ENCODE measurements at regions of chr3 and their contacts with region 1.

Region 1: DNA sequence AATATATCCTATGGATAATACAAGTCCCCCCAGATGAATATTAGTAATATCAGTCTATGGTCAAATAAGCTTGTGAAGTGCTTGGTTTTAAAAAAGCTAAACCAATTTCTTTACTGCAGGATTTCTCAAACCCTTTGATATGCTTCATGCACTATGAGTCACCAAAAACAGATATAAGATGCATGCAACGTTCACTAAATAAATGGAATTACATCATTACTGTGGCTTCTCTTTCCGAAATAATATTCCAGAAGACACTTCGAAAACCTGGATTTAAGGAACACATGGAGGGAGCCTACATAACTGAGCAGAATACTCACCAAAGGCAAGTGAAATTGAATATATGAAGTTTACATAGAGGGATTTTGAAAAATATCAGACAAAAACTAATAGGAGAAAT is 126.3 kb upstream of the ABI3BP start:
- DNase-seq: no peak
- H3K4me3 ChIP-seq: no peak overlapping the region
- H3K27ac ChIP-seq: no peak overlapping the region
- H3K4me1 ChIP-seq: no peaks in the 10 kb centered on the region
- H3K27me3 ChIP-seq: no peaks in the 10 kb centered on the region
- CTCF ChIP-seq: no peak
- POLR2A ChIP-seq: no peak

Region 2: GRCh38 chr3:100756441-100756840 is 363.1 kb before region 1 on chr3:
- intact Hi-C with region 1: loop called (anchors 5 kb)
- DNase-seq: no peak
- H3K4me3 ChIP-seq: no peak overlapping the region
- H3K27ac ChIP-seq: no peak overlapping the region
- H3K4me1 ChIP-seq: no peaks in the 10 kb centered on the region
- H3K27me3 ChIP-seq: no peaks in the 10 kb centered on the region
- CTCF ChIP-seq: no peak
- POLR2A ChIP-seq: no peak

Region 3: DNA sequence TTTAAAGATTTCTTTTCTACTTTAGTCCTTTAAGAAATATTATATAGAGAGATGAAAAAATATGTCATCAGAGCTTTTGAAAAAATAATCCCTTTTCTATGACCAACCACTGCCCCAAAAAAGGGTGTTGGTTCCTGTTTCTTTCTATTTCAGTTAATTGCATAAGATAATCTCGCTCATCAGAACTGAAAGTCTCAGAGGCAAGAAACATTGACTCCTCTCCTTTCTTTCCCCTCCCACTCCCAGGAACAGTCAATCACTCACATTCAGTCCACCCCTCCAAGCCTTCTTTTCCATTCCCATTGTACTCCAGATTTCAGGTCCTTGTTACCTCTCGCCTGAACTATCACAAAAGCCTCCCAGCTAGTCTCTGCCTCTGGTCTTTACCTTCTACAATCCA is 27.4 kb after region 1 on chr3:
- intact Hi-C with region 1: no loop called
- DNase-seq: no peak
- H3K4me3 ChIP-seq: no peak overlapping the region
- H3K27ac ChIP-seq: no peak overlapping the region
- H3K4me1 ChIP-seq: no peaks in the 10 kb centered on the region
- H3K27me3 ChIP-seq: no peaks in the 10 kb centered on the region
- CTCF ChIP-seq: no peak
- POLR2A ChIP-seq: no peak